T-cell (primary cell): ENCODE measurements at regions of chr21 and their contacts with region 1.

Region 1: GRCh38 chr21:34215911-34216717 is 142.7 kb downstream of the MRPS6 start:
- DNase-seq: no peak
- ATAC-seq: no peak
- H3K4me3 ChIP-seq: no peak overlapping the region
- H3K4me3 Mint-ChIP-seq: no peak overlapping the region
- H3K27ac ChIP-seq: no peak overlapping the region
- H3K27ac Mint-ChIP-seq: no peak overlapping the region
- H3K4me1 ChIP-seq: no peaks in the 10 kb centered on the region
- H3K4me1 Mint-ChIP-seq: no peaks in the 10 kb centered on the region
- H3K27me3 ChIP-seq: peaks cover 0 to under 1% of the 10 kb centered on the region in 2 experiments
- H3K27me3 Mint-ChIP-seq: no peaks in the 10 kb centered on the region

Region 2: GRCh38 chr21:34129901-34130715 is 86.0 kb before region 1 on chr21:
- CTCF ChIA-PET with region 1: no interaction called
- POLR2A ChIA-PET with region 1: interaction called in 1 of 2 experiments, 11 read pairs
- DNase-seq: no peak
- ATAC-seq: no peak
- H3K4me3 ChIP-seq: no peak overlapping the region
- H3K4me3 Mint-ChIP-seq: peak overlapping the region; percentile 49 to 64 (median 64)
- H3K27ac ChIP-seq: peak overlapping the region; percentile 50
- H3K27ac Mint-ChIP-seq: peak overlapping the region; percentile 90 to 92
- H3K4me1 ChIP-seq: peaks cover 50 to 57% of the 10 kb centered on the region in 2 experiments
- H3K4me1 Mint-ChIP-seq: peaks cover 91 to 95% (median 91%) of the 10 kb centered on the region in 3 donors
- H3K27me3 ChIP-seq: no peaks in the 10 kb centered on the region
- H3K27me3 Mint-ChIP-seq: no peaks in the 10 kb centered on the region